CD8-positive, alpha-beta T cell (primary cell): ENCODE measurements at regions of chr1 and their contacts with region 1.

Region 1: DNA sequence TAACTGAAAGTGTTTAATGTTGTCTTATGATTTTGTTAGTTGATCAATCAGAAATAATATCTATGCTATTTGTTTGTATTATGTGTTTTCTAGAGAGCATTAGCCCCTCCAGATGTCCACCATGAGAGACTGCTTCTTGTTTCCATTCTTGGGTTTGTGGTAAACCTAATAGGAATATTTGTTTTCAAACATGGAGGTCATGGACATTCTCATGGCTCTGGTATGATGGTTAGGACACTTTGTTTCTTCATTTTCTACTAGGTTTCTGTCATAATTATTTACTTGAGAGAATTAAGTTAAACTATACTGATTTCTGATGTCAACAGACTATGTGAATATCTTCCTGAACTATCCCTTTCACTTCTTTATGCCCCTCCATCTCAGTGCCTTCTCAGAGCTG is 16.1 kb downstream of the SLC30A7 start:
- DNase-seq: no peak
- ATAC-seq: no peak
- H3K4me3 ChIP-seq: no peak overlapping the region
- H3K4me3 Mint-ChIP-seq: no peak overlapping the region
- H3K27ac ChIP-seq: no peak overlapping the region
- H3K27ac Mint-ChIP-seq: peak overlapping the region; percentile 23
- H3K4me1 ChIP-seq: no peaks in the 10 kb centered on the region
- H3K4me1 Mint-ChIP-seq: peaks cover 41% of the 10 kb centered on the region
- H3K27me3 ChIP-seq: no peaks in the 10 kb centered on the region
- H3K27me3 Mint-ChIP-seq: no peaks in the 10 kb centered on the region
- CTCF ChIP-seq: no peak

Region 2: GRCh38 chr1:100699744-100700143 is 212.3 kb before region 1 on chr1:
- CTCF ChIA-PET with region 1: no interaction called
- POLR2A ChIA-PET with region 1: no interaction called
- intact Hi-C with region 1: no loop called
- DNase-seq: no peak
- ATAC-seq: no peak
- H3K4me3 ChIP-seq: no peak overlapping the region
- H3K4me3 Mint-ChIP-seq: no peak overlapping the region
- H3K27ac ChIP-seq: no peak overlapping the region
- H3K27ac Mint-ChIP-seq: no peak overlapping the region
- H3K4me1 ChIP-seq: no peaks in the 10 kb centered on the region
- H3K4me1 Mint-ChIP-seq: no peaks in the 10 kb centered on the region
- H3K27me3 ChIP-seq: no peaks in the 10 kb centered on the region
- H3K27me3 Mint-ChIP-seq: peaks cover 10% of the 10 kb centered on the region
- CTCF ChIP-seq: no peak

Region 3: GRCh38 chr1:100895540-100896483 is 16.2 kb before region 1 on chr1 and contains the start of gene SLC30A7:
- CTCF ChIA-PET with region 1: no interaction called
- POLR2A ChIA-PET with region 1: interaction called, 4 read pairs
- intact Hi-C with region 1: loop called in 1 of 2 experiments (anchors 2 kb)
- DNase-seq: peak; percentile 91 to 98 (median 96)
- ATAC-seq: peak; percentile 72
- H3K4me3 ChIP-seq: peak within 1 kb of the TSS; percentile 92 to 98
- H3K4me3 Mint-ChIP-seq: peak within 1 kb of the TSS; percentile 100
- H3K27ac ChIP-seq: peak within 1 kb of the TSS; percentile 85 to 99
- H3K27ac Mint-ChIP-seq: peak within 1 kb of the TSS; percentile 100
- H3K4me1 ChIP-seq: peaks cover 20% of the 10 kb centered on the region
- H3K4me1 Mint-ChIP-seq: peaks cover 49% of the 10 kb centered on the region
- H3K27me3 ChIP-seq: no peaks in the 10 kb centered on the region
- H3K27me3 Mint-ChIP-seq: no peaks in the 10 kb centered on the region
- CTCF ChIP-seq: no peak
- total RNA-seq, gene SLC30A7: 18.8 to 20.2 TPM

Region 4: DNA sequence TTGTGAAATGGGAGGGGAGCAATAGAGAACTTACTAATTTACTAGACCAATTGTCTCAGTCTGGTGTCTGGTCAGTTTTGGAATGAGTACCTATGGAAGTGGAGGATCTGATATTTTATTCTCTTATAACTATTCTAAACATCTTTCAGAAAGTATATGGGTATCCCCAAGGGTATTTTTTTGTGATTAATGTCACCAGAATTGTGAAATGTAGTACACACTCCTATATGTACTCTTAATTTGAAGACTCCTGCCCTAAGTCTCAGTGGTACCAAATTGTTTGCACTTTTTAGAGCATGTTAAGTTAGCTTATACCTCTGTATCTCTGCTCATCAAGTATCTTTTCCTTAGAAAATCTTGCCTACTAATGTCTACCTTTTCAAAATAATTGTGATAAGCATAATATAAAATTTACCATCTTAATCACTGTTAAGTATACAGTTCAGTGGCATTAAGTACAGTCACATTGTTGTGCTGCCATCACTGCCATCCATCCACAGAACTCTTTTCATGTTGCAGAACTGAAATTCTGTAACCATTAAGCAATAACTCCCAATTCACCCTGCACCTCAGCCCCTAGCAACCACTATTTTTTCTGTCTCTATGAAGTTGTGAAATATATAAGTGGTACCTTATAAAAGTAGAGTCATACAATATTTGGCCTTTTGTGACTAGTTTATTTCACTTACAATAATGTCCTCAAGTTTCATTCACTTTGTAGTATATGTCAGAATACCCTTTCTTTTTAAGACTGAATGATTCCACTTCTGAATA is 24.4 kb after region 1 on chr1:
- CTCF ChIA-PET with region 1: no interaction called
- POLR2A ChIA-PET with region 1: no interaction called
- intact Hi-C with region 1: no loop called
- DNase-seq: no peak
- ATAC-seq: no peak
- H3K4me3 ChIP-seq: no peak overlapping the region
- H3K4me3 Mint-ChIP-seq: no peak overlapping the region
- H3K27ac ChIP-seq: no peak overlapping the region
- H3K27ac Mint-ChIP-seq: no peak overlapping the region
- H3K4me1 ChIP-seq: peaks cover 29% of the 10 kb centered on the region
- H3K4me1 Mint-ChIP-seq: peaks cover 70% of the 10 kb centered on the region
- H3K27me3 ChIP-seq: no peaks in the 10 kb centered on the region
- H3K27me3 Mint-ChIP-seq: no peaks in the 10 kb centered on the region
- CTCF ChIP-seq: no peak

Region 5: DNA sequence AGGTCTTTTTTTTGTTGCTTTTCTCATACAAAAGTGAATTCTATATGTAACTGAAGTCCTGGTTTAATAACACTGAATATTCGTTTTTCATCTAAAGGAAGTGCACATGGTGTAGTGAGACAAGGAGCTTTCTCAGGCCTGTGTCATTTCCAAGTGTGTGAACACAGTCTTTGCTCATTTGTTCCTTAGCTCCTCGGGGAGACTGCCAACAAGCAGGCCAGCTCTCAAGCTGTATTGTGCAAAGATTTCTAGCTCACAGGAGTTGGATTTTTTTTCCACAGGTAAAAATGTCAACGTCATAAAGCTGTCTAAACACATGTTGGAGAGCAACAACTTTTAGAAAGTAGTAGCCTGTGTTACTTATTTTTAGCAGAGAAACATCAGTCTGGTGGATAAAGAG is 237.0 kb after region 1 on chr1:
- CTCF ChIA-PET with region 1: no interaction called
- POLR2A ChIA-PET with region 1: no interaction called
- intact Hi-C with region 1: no loop called
- DNase-seq: no peak
- ATAC-seq: no peak
- H3K4me3 ChIP-seq: no peak overlapping the region
- H3K4me3 Mint-ChIP-seq: no peak overlapping the region
- H3K27ac ChIP-seq: no peak overlapping the region
- H3K27ac Mint-ChIP-seq: no peak overlapping the region
- H3K4me1 ChIP-seq: no peaks in the 10 kb centered on the region
- H3K4me1 Mint-ChIP-seq: peaks cover 6% of the 10 kb centered on the region
- H3K27me3 ChIP-seq: no peaks in the 10 kb centered on the region
- H3K27me3 Mint-ChIP-seq: no peaks in the 10 kb centered on the region
- CTCF ChIP-seq: no peak

Region 6: GRCh38 chr1:101167891-101168290 is 255.9 kb after region 1 on chr1:
- CTCF ChIA-PET with region 1: no interaction called
- POLR2A ChIA-PET with region 1: no interaction called
- intact Hi-C with region 1: no loop called
- DNase-seq: no peak
- ATAC-seq: no peak
- H3K4me3 ChIP-seq: no peak overlapping the region
- H3K4me3 Mint-ChIP-seq: no peak overlapping the region
- H3K27ac ChIP-seq: no peak overlapping the region
- H3K27ac Mint-ChIP-seq: no peak overlapping the region
- H3K4me1 ChIP-seq: no peaks in the 10 kb centered on the region
- H3K4me1 Mint-ChIP-seq: no peaks in the 10 kb centered on the region
- H3K27me3 ChIP-seq: no peaks in the 10 kb centered on the region
- H3K27me3 Mint-ChIP-seq: no peaks in the 10 kb centered on the region
- CTCF ChIP-seq: no peak

Region 7: DNA sequence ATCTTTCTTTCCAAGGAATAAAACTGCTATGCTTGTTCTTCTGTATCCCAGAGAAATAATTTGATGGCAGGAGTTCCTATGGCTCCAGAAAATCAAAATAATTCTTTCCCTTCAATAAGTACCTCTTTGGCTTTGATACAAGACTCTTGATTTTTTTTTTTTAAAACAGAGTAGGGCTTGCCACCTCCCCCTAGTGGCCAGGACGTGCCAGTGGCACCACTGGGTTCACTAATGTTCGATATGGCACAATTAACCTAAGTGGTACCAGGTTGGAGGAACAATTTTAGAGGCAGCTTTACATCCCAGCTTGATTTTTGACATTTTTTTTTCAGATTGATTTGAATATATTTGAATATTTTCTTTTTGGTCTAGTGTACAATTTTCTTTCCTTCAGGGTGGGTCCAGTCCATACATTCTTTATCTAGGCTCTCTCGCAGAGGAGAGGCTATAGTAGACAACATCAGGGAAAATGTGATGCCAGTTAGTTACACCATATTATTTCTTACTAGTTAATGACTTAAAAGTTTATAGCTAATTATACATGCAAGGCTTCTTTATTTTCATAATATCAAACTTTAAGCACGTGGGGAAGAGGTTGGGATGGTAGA is 655.7 kb after region 1 on chr1:
- CTCF ChIA-PET with region 1: no interaction called
- POLR2A ChIA-PET with region 1: no interaction called
- intact Hi-C with region 1: loop called in 1 of 2 experiments (anchors 5 kb)
- DNase-seq: peak; percentile 2 to 64 (median 48)
- ATAC-seq: peak; percentile 84
- H3K4me3 ChIP-seq: no peak overlapping the region
- H3K4me3 Mint-ChIP-seq: no peak overlapping the region
- H3K27ac ChIP-seq: no peak overlapping the region
- H3K27ac Mint-ChIP-seq: no peak overlapping the region
- H3K4me1 ChIP-seq: no peaks in the 10 kb centered on the region
- H3K4me1 Mint-ChIP-seq: no peaks in the 10 kb centered on the region
- H3K27me3 ChIP-seq: no peaks in the 10 kb centered on the region
- H3K27me3 Mint-ChIP-seq: peaks cover 3% of the 10 kb centered on the region
- CTCF ChIP-seq: peak; percentile 99